WTC11 (cell line): ENCODE measurements at regions of chr11 and their contacts with region 1.

Region 1: DNA sequence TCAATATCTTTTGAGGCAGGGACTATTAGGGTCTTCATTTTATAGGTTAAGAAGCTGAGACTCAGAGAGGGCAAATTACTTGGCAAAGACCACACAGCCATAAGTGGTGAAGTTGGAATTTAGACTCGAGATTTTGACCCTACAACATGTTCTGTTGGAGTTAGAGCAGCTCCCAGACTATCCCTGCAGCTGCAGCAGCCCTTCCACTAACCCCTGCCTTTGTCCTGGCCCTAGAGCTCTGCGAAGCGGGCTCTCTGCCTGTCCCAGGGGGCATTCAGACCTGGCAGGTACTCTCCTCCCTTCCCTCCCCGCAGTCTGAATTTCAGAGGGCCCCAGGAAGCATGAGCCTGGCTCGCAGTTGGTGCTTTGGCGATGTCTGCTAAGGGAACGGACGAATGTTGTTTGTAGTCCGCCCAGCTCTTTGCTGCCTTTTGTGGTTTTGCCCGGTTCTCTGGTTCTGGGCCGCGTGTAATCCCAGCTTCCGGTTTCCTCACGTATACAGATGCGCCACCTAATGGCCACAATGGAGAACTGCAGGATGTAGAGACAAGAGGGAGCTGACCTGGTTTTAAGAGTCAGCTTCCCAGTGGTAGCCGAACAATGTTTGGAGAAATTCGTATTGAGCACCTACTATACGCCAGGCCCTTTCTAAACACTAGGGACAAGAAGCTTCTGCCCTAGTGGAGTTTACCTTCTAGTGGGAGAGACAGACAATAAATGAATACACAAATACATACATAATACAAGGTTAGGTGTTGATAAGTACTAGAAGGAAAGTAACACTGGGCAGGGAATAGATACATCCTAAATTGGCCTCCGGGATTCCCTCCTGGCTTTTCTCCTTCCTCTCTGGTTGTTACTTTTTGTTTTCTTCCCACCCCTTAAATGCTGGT is 125.2 kb downstream of the ST3GAL4 start:
- DNase-seq: peak; percentile 77
- ATAC-seq: peak; percentile 80
- H3K4me3 Mint-ChIP-seq: peak overlapping the region; percentile 34; the same call in 1 of the 2 replicates
- H3K27ac Mint-ChIP-seq: peak overlapping the region; percentile 81; the same call in 1 of the 2 replicates
- H3K4me1 Mint-ChIP-seq: peaks cover 11% of the 10 kb centered on the region
- H3K27me3 Mint-ChIP-seq: no peaks in the 10 kb centered on the region
- CTCF ChIP-seq: peak; percentile 92

Region 2: GRCh38 chr11:126140932-126141291 is 339.7 kb before region 1 on chr11:
- CTCF ChIA-PET with region 1: no interaction called
- POLR2A ChIA-PET with region 1: no interaction called
- DNase-seq: no peak
- ATAC-seq: no peak
- H3K4me3 Mint-ChIP-seq: no peak overlapping the region
- H3K27ac Mint-ChIP-seq: no peak overlapping the region
- H3K4me1 Mint-ChIP-seq: peaks cover 28% of the 10 kb centered on the region
- H3K27me3 Mint-ChIP-seq: no peaks in the 10 kb centered on the region
- CTCF ChIP-seq: no peak

Region 3: GRCh38 chr11:126431401-126432064 is 49.1 kb before region 1 on chr11:
- CTCF ChIA-PET with region 1: interaction called, 15 read pairs
- POLR2A ChIA-PET with region 1: no interaction called
- DNase-seq: no peak
- ATAC-seq: no peak
- H3K4me3 Mint-ChIP-seq: no peak overlapping the region
- H3K27ac Mint-ChIP-seq: no peak overlapping the region
- H3K4me1 Mint-ChIP-seq: peaks cover 21% of the 10 kb centered on the region
- H3K27me3 Mint-ChIP-seq: no peaks in the 10 kb centered on the region
- CTCF ChIP-seq: no peak

Region 4: DNA sequence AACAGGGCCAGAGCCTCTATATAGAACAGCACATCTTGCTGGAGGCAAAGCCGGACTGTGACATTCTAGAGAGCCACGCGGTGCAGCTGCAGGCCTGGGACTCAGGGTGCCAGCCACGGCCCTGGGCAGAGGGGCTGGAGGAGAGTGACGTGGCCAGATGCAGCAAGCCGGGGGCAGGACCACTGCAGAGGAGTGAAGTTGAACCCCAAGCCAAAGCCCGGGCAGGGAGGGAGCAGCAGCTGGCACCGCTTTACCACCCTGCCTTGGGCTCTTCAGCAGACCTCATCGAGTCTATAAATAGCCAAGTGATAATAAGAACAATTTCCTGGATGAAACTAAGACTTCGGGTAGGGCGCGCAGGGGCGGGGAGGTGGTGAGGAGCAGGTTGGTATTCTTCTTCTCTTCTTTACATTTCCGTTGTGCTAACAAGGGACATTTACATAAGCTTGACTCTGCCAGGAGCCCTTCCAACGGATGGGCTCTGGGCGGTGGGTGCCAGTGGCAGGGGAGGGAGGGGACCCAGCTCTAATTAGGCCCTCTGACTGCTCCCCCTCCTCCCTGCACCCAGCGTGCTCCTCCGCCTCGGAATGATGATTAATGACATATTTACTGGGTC is 15.0 kb before region 1 on chr11:
- CTCF ChIA-PET with region 1: interaction called, 59 read pairs
- POLR2A ChIA-PET with region 1: no interaction called
- DNase-seq: no peak
- ATAC-seq: peak; percentile 24; the same call in 1 of the 2 replicates
- H3K4me3 Mint-ChIP-seq: no peak overlapping the region
- H3K27ac Mint-ChIP-seq: no peak overlapping the region
- H3K4me1 Mint-ChIP-seq: peaks cover 14% of the 10 kb centered on the region
- H3K27me3 Mint-ChIP-seq: no peaks in the 10 kb centered on the region
- CTCF ChIP-seq: no peak

Region 5: DNA sequence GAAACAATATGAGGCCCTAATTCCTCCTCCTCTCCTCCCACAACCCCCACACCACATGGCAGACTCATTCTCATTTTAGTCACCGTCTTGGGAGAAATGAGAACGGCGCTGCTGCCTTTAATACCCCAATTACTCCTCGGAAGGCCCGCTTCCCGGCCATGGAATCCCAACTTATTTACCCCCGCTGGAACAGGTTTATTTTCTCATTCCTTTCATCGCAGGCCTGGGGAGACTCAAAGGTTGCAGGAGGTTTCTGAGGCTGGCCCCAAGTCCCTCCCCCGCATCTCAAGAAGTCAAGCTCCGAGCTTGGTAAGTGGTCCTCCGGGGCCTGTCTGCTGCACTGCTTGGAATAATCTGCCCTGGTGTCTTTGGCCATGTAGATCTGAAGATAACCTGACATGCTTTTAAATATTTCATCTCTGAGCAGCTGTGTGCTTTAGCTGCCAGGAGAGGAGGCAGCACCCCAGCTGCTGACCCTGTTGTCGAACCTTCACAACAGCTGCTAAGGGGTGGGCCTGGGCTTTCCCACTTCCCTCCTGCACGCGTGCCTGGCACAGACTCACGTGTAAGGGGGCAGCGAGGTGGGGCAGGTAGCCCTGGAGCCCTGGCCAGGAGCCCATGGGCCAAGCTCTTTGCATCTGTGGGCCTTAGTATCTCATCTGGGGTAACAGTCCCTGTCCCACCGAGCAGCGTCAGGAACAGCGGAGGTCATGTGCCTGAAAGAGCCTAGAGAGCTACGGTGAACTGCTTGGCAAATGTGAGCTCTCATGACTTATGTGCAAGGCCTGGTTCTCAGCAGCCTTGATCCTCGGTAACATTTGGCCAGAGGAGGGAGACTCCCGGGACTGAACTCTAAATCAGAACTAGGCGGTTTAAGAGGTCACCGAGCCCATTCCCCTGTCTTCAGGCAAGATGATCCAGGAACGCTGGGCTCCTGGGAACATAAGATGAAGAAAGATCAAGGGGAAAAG is 39.4 kb after region 1 on chr11:
- CTCF ChIA-PET with region 1: interaction called, 12 read pairs
- POLR2A ChIA-PET with region 1: no interaction called
- DNase-seq: no peak
- ATAC-seq: no peak
- H3K4me3 Mint-ChIP-seq: no peak overlapping the region
- H3K27ac Mint-ChIP-seq: no peak overlapping the region
- H3K4me1 Mint-ChIP-seq: peaks cover 7% of the 10 kb centered on the region; the same call in 1 of the 2 replicates
- H3K27me3 Mint-ChIP-seq: no peaks in the 10 kb centered on the region; the same call in 1 of the 2 replicates
- CTCF ChIP-seq: no peak

Region 6: DNA sequence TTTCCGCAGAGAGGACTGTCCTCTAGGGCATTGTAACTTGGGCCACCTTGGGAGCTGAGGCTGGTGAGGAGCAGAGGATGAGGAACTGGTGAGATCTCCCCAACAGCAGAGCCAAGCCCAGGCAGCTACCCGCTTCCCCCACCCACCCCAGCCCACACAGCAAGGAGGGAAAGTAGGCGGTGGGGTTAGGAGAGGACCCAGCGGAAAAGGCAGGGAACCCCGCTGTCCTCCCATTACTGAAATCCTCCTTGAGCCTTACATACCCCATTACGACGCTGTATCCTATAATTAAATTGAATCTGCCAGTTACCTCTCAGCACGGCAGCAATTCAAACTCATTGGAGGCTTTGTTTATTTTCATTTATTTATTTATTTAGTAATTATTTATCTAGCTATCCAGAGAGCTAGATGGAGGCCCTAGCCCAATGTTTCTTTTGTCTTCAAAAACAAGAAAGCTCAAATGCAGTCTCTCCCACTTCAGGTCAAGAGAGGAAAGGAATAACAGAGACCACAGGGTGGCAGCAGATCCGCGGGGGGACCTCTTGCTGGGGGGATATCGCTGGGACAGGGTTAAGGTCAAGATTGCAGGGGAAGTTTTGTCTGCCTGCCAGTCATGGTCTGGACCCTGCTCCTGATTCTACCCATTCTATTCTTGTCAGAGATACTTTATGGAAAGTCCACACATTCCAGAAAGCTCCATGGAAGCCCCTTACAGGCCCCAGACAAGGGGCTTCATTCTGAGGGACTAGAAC is 92.8 kb after region 1 on chr11:
- CTCF ChIA-PET with region 1: interaction called, 18 read pairs
- POLR2A ChIA-PET with region 1: no interaction called
- DNase-seq: peak; percentile 58
- ATAC-seq: peak; percentile 86
- H3K4me3 Mint-ChIP-seq: no peak overlapping the region
- H3K27ac Mint-ChIP-seq: no peak overlapping the region
- H3K4me1 Mint-ChIP-seq: peaks cover 16% of the 10 kb centered on the region
- H3K27me3 Mint-ChIP-seq: peaks cover 2% of the 10 kb centered on the region
- CTCF ChIP-seq: peak; percentile 32; the same call in 1 of the 2 replicates